IMR-90 (cell line): ENCODE measurements at regions of chr22 and their contacts with region 1.

Region 1: GRCh38 chr22:41022470-41023298 is 69.7 kb upstream of the EP300 start:
- DNase-seq: peak; percentile 76
- ATAC-seq: peak; percentile 87
- H3K4me3 ChIP-seq: peak overlapping the region; percentile 54
- H3K27ac ChIP-seq: peak overlapping the region; percentile 79
- H3K4me1 ChIP-seq: peaks cover 9% of the 10 kb centered on the region
- H3K27me3 ChIP-seq: no peaks in the 10 kb centered on the region
- CTCF ChIP-seq: no peak
- POLR2A ChIP-seq: no peak
- RAD21 ChIP-seq: no peak

Region 2: DNA sequence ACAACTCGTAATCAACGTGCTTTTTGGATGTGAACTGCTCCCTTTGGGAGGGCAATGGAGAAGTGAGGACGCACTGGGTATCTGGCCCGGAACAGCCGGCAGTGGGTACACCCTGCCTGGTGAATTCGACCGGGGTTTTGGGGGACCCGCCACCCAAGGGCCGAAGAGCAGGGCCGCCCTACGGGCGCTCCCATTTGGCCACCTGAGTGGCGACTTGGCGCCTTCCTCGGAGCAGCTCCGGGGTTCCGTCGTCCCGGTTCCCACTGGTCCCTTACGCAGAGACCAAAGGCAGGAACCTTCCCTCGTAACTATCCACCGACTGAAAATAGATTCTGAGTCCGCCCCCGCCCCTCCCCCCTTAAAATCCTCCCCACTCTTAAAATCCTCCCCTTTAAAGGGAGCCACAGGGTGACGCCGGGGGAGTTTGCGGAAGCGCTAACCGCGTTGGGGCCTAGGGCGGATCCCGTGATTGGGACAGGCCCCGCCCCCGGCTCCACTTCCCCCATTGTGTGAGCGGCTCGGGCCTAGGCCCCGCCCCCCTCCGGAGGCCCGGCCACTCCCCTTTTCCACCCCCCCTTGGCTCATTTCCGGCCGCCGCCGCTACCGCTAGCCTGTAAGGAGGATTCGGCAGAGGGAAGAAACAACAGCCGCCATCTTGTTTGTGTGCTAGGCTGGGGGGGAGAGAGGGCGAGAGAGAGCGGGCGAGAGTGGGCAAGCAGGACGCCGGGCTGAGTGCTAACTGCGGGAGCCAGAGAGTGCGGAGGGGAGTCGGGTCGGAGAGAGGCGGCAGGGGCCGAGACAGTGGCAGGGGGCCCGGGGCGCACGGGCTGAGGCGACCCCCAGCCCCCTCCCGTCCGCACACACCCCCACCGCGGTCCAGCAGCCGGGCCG is 68.7 kb after region 1 on chr22:
- CTCF ChIA-PET with region 1: no interaction called
- POLR2A ChIA-PET with region 1: no interaction called
- dilution Hi-C with region 1: no loop called
- in situ Hi-C with region 1: no loop called
- intact Hi-C with region 1: loop called (anchors 1 kb)
- DNase-seq: peak; percentile 98
- ATAC-seq: peak; percentile 93
- H3K4me3 ChIP-seq: peak overlapping the region; percentile 84
- H3K27ac ChIP-seq: peak overlapping the region; percentile 97
- H3K4me1 ChIP-seq: peaks cover 3% of the 10 kb centered on the region
- H3K27me3 ChIP-seq: no peaks in the 10 kb centered on the region
- CTCF ChIP-seq: no peak
- POLR2A ChIP-seq: peak; percentile 77
- RAD21 ChIP-seq: 0 out of 2 replicates have a peak, but pooled peaks have one; percentile 25